ENCODE measurements at regions of chr12 and their contacts with region 1.

Region 1: GRCh38 chr12:11719678-11720099 is 70.2 kb downstream of the ETV6 start:
- DNase-seq: peak; percentile 96
- H3K4me3 ChIP-seq: no peak overlapping the region
- H3K27ac ChIP-seq: peak overlapping the region; percentile 80
- H3K4me1 ChIP-seq: peaks cover 67% of the 10 kb centered on the region
- H3K27me3 ChIP-seq: no peaks in the 10 kb centered on the region
- CTCF ChIP-seq: no peak

Region 2: DNA sequence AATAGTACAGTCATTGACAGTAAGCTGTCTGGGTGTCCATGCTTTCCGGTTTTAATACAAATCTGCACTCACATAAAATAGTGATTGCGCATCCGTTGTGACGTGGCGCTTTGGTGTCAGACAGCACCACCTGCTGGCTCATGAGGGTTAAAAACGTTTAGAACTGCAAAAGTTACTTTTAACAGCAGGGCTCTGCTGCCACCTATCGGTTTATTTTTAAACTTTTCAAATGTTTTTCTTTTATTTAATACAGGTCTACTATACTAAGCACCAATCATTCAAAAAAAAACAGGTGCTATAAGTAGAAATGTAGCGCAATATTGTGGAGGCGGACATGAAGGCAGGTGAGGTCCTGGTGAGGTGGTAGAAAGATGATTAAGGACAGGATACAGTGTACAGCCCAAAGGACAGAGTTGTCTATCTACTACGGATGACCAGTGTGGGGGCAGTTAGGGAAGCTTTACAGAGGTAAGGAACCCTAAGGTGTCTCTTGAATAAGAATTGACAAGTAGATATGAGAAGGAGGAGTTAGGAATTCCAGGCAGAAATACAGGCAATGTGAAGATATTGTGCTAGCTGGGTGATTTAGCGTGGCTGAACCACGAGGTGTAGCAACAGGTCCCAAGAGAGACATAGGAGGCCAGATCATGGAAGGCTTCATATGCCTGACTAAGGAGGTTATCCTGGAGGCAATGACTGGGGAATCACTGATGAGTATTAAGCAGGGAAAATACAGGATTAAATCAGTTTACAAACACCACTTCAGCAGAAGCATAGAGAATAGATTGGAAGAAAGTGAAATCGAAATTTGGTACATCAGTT is 232.9 kb before region 1 on chr12:
- CTCF ChIA-PET with region 1: no interaction called
- POLR2A ChIA-PET with region 1: no interaction called
- intact Hi-C with region 1: no loop called
- DNase-seq: peak; percentile 93
- H3K4me3 ChIP-seq: no peak overlapping the region
- H3K27ac ChIP-seq: no peak overlapping the region
- H3K4me1 ChIP-seq: no peaks in the 10 kb centered on the region
- H3K27me3 ChIP-seq: no peaks in the 10 kb centered on the region
- CTCF ChIP-seq: peak; percentile 99

Region 3: DNA sequence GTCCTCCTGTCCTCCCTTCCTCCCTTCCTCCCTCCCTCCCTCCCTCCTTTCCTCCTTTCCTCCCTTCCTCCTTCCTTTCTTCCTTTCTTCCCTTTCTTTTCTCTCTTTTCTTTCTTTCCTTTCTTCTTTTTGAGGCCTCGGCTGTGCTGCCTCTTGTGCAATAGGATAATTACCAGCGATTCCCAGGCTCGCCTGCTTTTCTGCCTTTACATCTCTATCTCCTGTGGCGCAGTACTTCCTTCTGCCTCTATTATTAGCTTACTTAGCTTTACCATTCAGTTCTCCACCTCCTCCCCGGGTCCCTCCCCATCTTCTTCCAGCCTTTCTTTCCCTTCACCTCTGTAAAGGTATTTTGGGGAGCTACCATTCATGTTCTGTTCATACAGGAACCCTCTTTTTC is 50.3 kb before region 1 on chr12:
- CTCF ChIA-PET with region 1: no interaction called
- POLR2A ChIA-PET with region 1: interaction called, 11 read pairs
- intact Hi-C with region 1: no loop called
- DNase-seq: peak; percentile 84
- H3K4me3 ChIP-seq: no peak overlapping the region
- H3K27ac ChIP-seq: peak overlapping the region; percentile 23
- H3K4me1 ChIP-seq: peaks cover 33% of the 10 kb centered on the region
- H3K27me3 ChIP-seq: no peaks in the 10 kb centered on the region
- CTCF ChIP-seq: no peak

Region 4: DNA sequence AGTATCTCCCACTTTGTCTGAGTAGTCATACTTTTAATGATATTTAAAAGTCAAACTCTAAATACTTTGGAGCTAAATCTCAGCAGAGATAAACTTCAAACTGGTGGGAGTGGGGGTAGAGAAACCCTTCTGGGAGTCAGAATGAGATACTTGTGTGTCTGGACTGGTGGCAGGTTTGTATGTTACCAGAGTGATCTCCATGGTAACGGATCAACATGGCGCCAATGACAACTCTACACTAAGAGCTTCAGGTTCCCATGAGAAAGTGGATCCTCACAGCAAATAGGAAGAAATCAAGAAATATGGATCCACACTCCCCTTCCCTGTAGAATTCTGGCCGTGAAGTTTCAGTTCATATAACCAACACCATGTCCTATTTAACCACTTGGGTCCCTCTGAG is 51.7 kb after region 1 on chr12:
- CTCF ChIA-PET with region 1: interaction called, 13 read pairs
- POLR2A ChIA-PET with region 1: no interaction called
- intact Hi-C with region 1: no loop called
- DNase-seq: no peak
- H3K4me3 ChIP-seq: no peak overlapping the region
- H3K27ac ChIP-seq: no peak overlapping the region
- H3K4me1 ChIP-seq: peaks cover 21% of the 10 kb centered on the region
- H3K27me3 ChIP-seq: no peaks in the 10 kb centered on the region
- CTCF ChIP-seq: no peak

Region 5: DNA sequence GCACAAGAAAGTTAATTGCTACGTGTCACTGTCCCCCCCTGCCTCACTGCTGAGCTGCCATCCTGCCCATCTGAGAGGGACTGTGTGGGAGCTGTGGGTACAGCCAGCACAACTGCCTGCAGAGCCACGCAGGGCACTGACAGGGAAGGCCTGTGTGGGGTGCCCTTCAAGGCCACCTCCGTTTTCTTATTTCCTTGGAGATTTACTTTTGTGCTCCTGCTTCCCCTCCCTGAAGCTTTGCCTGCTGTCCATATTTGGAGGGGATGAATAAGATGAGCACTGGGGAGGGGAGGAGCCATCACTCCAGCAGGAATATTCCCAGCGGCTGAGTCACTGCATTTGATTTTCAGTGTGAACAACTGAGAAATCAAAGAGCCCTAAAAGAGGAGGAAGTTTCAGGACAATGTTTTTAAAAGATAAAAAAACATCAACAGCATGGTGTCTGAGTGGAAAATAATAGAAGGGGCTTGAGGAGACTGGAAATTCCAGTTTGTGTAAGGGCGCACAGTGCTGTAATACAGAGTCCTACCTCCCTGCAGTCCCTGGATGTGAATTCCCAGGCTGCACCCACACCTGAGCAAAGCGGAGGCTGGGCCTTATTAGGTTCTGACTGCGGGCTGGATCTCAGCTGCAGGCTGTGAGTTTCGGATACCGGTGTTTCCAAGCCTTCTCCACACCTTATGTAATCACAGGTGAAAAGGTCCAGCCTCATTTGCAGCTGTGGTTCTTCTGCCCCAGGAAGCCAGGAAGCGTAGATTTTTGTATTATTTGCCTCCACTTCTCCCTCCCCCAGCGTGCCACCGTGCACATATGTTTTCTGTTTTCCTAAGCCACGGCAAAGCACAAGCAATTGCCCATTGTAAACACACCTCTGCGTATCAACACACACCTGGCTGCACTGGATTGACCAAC is 158.4 kb after region 1 on chr12:
- CTCF ChIA-PET with region 1: no interaction called
- POLR2A ChIA-PET with region 1: no interaction called
- intact Hi-C with region 1: loop called (anchors 5 kb)
- DNase-seq: peak; percentile 84
- H3K4me3 ChIP-seq: no peak overlapping the region
- H3K27ac ChIP-seq: peak overlapping the region; percentile 73
- H3K4me1 ChIP-seq: peaks cover 49% of the 10 kb centered on the region
- H3K27me3 ChIP-seq: no peaks in the 10 kb centered on the region
- CTCF ChIP-seq: no peak

Region 6: GRCh38 chr12:12147111-12147510 is 427.4 kb after region 1 on chr12:
- CTCF ChIA-PET with region 1: no interaction called
- POLR2A ChIA-PET with region 1: no interaction called
- intact Hi-C with region 1: no loop called
- DNase-seq: no peak
- H3K4me3 ChIP-seq: no peak overlapping the region
- H3K27ac ChIP-seq: no peak overlapping the region
- H3K4me1 ChIP-seq: no peaks in the 10 kb centered on the region
- H3K27me3 ChIP-seq: no peaks in the 10 kb centered on the region
- CTCF ChIP-seq: no peak

Region 7: GRCh38 chr12:12425001-12425400 is 705.3 kb after region 1 on chr12:
- CTCF ChIA-PET with region 1: no interaction called
- POLR2A ChIA-PET with region 1: no interaction called
- intact Hi-C with region 1: no loop called
- DNase-seq: no peak
- H3K4me3 ChIP-seq: no peak overlapping the region
- H3K27ac ChIP-seq: no peak overlapping the region
- H3K4me1 ChIP-seq: no peaks in the 10 kb centered on the region
- H3K27me3 ChIP-seq: no peaks in the 10 kb centered on the region
- CTCF ChIP-seq: no peak

Measured in A673 (cell line).